OCI-LY7 (cell line): ENCODE measurements at regions of chr12 and their contacts with region 1.

Region 1: GRCh38 chr12:104108755-104109445 is 29.1 kb downstream of the NFYB start:
- DNase-seq: peak; percentile 80
- H3K4me3 ChIP-seq: no peak overlapping the region
- H3K27ac ChIP-seq: no peak overlapping the region
- H3K4me1 ChIP-seq: no peaks in the 10 kb centered on the region
- CTCF ChIP-seq: peak; percentile 99

Region 2: GRCh38 chr12:103877934-103878510 is 230.9 kb before region 1 on chr12:
- CTCF ChIA-PET with region 1: interaction called, 3 read pairs
- POLR2A ChIA-PET with region 1: interaction called, 3 read pairs
- intact Hi-C with region 1: loop called (anchors 1 kb)
- DNase-seq: peak; percentile 76
- H3K4me3 ChIP-seq: no peak overlapping the region
- H3K27ac ChIP-seq: no peak overlapping the region
- H3K4me1 ChIP-seq: peaks cover 17% of the 10 kb centered on the region
- CTCF ChIP-seq: peak; percentile 93

Region 3: DNA sequence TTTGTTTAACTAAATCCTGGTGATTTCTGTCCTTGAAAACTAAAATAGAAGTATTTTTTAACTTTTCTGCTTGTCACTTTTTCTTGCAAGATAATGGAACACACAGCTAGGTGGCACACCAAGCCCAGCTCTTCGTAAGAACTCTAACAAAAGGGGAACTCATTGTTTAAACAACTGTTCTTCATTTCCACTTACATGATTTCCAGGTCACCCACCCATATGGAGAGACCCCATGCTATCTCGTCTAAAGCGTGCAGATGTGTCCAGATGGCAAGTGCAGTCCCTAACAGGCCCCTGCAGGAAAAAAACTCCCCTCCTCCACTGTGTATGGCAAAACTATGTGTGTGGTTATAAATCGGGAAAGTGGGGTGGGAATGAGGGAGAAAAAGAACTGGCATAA is 224.6 kb before region 1 on chr12:
- CTCF ChIA-PET with region 1: interaction called, 3 read pairs
- POLR2A ChIA-PET with region 1: interaction called, 3 read pairs
- intact Hi-C with region 1: loop called (anchors 1 kb)
- DNase-seq: peak; percentile 61
- H3K4me3 ChIP-seq: no peak overlapping the region
- H3K27ac ChIP-seq: no peak overlapping the region
- H3K4me1 ChIP-seq: peaks cover 13% of the 10 kb centered on the region
- CTCF ChIP-seq: peak; percentile 80

Region 4: DNA sequence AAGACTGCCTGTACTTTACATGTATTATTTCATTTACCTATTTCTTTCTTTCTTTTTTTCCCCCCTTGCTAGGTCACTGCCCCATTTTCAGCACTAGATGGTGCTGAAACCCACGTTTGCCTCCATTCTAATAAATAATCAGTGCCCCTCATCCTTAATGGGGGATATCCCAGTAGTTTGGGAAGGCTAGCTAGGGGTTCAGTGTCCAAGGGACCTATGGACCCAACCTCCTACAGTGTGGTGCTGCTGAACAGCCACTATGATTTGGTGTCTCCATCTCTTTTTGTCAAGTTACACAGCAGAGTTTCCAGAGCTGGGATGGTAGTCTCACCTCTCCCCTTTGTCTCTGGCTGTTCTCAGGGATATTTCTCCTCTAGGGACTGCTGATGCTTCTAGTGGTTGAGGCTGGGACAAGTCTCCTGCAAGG is 51.1 kb before region 1 on chr12:
- CTCF ChIA-PET with region 1: interaction called, 8 read pairs
- POLR2A ChIA-PET with region 1: interaction called, 3 read pairs
- intact Hi-C with region 1: loop called (anchors 1 kb)
- DNase-seq: peak; percentile 37
- H3K4me3 ChIP-seq: no peak overlapping the region
- H3K27ac ChIP-seq: no peak overlapping the region
- H3K4me1 ChIP-seq: no peaks in the 10 kb centered on the region
- CTCF ChIP-seq: peak; percentile 90

Region 5: DNA sequence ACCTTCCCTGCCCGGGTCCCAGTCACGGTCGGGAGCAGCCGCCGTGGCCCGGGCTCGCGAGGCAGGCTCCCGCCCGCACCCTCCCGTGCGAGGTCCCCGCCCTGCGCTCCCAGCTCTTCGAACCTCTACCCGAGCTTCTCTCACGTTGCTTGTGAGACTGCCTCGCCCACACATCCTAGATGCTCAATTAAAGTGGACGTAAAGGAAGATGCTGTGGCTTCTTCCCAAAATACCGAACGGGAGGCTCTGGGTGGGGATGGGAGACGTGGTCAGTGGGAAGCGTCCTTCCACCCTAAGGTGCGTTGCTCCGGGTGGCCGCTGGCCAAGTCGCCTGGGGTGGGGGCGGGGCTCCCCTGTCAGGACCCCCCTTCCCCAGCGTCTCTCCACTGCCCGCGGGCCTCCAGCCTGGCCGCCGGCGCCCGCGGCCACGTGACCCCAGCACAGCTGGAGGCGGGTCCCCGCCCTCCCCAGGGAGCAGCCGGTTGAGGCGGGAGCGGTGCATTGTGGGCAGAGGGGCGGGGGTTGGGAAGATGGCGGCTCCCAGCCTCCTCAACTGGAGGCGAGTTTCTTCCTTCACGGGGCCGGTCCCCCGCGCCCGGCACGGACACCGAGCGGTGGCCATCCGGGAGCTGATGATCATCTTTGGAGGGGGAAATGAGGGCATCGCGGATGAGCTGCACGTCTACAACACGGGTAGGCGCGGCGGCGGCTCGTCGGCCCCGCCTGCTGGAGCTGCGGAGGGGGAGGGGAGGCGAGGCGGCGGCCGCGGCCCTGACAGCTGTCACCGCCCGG is 44.7 kb before region 1 on chr12 and contains the start of gene HCFC2:
- CTCF ChIA-PET with region 1: interaction called, 10 read pairs
- POLR2A ChIA-PET with region 1: interaction called, 4 read pairs
- intact Hi-C with region 1: loop called (anchors 2 kb)
- DNase-seq: peak; percentile 91
- H3K4me3 ChIP-seq: peak within 1 kb of the TSS; percentile 97
- H3K27ac ChIP-seq: peak within 1 kb of the TSS; percentile 28
- H3K4me1 ChIP-seq: peaks cover 16% of the 10 kb centered on the region
- CTCF ChIP-seq: no peak
- total RNA-seq, gene HCFC2: 8.7 and 14.6 TPM in 2 replicates